OCI-LY7 (cell line): ENCODE measurements at regions of chr14 and their contacts with region 1.

Region 1: GRCh38 chr14:24366721-24367513 is 1.1 kb upstream of the NFATC4 start:
- DNase-seq: peak; percentile 98
- H3K4me3 ChIP-seq: peak overlapping the region; percentile 91
- H3K27ac ChIP-seq: peak overlapping the region; percentile 93
- H3K4me1 ChIP-seq: peaks cover 29% of the 10 kb centered on the region
- CTCF ChIP-seq: no peak

Region 2: DNA sequence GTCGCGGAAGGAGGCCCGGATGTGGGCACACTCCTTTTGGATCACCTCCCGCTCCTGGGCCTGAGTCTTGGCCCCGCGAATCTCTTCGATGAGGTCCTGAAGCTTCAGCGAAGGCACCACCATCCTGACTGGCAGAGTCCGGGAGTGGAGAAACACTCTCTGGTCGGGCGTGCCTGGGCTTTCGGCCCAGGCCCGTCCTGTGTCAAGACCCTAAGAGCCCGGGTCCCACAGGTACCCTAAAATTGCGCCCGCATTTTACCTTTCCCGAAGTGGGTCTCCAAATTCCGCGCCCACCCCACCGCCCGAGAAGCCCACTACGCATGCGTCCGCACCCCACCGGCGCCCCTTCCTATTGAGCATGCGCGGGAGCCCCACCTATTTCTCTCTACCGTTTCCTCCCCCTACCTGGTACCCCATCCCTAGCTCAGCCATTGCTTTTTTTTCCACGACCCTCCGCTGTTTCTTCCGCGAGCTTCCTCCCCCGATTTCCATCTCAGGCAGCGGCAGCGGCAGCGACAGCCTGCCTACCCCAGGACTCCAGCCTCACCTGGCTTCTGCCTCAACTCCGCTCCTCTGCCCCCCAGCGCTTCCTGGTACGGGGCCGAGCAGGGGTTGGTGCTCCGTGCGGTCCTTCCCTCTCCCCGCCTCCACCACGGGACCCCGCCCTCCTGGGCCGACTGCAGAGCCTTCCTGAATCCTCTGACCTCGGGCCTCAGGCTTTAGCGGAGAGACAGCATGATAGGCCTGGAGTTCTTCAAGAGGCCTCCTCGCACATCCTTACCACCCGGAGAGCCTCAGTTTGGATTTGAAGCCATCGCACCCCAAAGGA is 799.5 kb before region 1 on chr14 and contains the start of gene AP1G2:
- CTCF ChIA-PET with region 1: no interaction called
- POLR2A ChIA-PET with region 1: no interaction called
- intact Hi-C with region 1: loop called (anchors 10 kb)
- DNase-seq: peak; percentile 90
- H3K4me3 ChIP-seq: peak within 1 kb of the TSS; percentile 85
- H3K27ac ChIP-seq: peak within 1 kb of the TSS; percentile 55
- H3K4me1 ChIP-seq: peaks cover 29% of the 10 kb centered on the region
- CTCF ChIP-seq: no peak
- total RNA-seq, gene AP1G2: 110 and 129 TPM in 2 replicates

Region 3: GRCh38 chr14:24146978-24147760 is 219.7 kb before region 1 on chr14 and contains the start of gene RNF31:
- CTCF ChIA-PET with region 1: no interaction called
- POLR2A ChIA-PET with region 1: no interaction called
- intact Hi-C with region 1: loop called (anchors 2 kb)
- DNase-seq: peak; percentile 99
- H3K4me3 ChIP-seq: peak within 1 kb of the TSS; percentile 94
- H3K27ac ChIP-seq: peak within 1 kb of the TSS; percentile 82
- H3K4me1 ChIP-seq: peaks cover 20% of the 10 kb centered on the region
- CTCF ChIP-seq: no peak
- total RNA-seq, gene RNF31: 37.8 and 66.1 TPM in 2 replicates

Region 4: DNA sequence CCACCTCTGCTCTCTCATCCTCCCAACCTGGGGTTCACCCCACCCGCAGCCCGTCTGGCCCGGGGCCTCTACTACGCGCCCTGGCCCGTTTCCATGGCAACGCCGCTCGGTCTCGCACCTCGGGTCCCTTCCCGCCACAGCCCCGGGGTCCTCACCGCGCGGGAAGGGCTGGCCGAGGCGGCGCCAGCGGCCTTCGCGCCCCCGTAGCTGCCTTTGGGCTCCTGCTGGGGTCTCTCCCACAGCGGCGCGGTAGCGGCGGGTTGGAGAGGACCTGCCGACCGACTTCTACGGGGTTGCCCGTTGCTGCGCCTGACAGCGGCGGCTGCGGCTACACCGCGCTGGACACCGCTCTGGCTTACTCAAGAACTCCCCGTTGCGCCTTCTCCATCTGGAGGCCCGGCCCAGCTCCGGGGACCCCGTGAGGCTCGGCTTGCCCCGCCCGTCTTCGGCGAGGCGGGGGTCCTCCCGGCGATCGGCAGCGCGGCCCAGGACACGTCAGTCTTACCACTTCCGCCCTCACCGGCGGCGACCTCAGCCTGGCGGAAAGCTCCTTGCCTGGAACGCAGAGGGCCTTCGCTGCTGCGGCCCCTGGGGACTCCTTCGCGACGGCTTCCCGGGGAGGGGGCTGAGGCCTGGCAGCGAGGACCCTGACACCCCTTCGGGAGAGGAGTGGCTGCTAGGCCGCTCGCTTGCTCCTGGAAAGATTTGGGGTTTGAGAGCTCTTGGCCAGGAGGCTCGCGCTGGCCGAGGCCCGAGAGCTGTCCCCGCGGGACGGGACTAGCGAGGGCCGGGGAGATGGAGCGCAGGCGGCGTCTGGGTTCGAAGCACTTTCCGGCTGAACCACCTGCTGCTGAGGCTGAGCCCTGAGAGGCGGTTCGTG is 171.5 kb before region 1 on chr14 and contains the start of gene TM9SF1:
- CTCF ChIA-PET with region 1: no interaction called
- POLR2A ChIA-PET with region 1: no interaction called
- intact Hi-C with region 1: loop called (anchors 5 kb)
- DNase-seq: peak; percentile 93
- H3K4me3 ChIP-seq: peak within 1 kb of the TSS; percentile 75
- H3K27ac ChIP-seq: peak within 1 kb of the TSS; percentile 86
- H3K4me1 ChIP-seq: peaks cover 26% of the 10 kb centered on the region
- CTCF ChIP-seq: no peak
- total RNA-seq, gene TM9SF1: 23.4 and 31.3 TPM in 2 replicates

Region 5: DNA sequence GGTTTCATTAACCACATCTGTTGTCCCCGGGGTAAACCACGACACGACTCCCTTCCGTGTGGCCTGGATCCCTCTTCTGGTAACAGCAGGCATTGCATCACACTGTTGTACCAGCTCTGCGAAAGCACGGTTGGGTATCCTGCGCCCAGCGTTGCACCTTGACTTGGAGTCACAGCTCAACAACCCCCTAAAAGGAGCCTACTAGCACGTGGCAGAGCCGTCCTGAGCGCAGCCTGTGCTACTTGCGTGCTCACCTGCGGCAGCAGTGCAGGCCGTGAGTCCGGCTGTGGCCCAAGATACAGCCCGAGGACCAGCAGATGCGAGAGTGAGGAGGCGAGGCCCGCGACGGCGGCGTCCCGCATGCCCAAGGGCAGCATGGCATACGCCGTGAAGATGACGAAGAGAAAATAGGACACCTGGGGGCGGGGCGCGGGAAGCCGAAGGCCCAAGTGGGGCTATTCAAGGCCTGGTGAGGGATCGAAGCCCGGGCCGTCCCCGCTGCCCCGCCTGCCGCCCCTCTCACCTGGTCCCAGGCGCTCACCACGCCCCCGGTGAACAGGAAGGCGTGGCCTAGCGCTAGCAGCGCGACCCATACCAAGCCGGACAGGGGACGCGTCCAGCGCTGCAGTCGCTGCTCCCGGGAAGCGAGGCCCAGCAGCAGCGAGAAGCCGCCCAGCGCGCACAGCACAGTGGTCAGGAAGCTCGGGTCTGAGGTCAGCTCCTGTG is 34.5 kb before region 1 on chr14:
- CTCF ChIA-PET with region 1: interaction called, 3 read pairs
- POLR2A ChIA-PET with region 1: interaction called, 3 read pairs
- intact Hi-C with region 1: loop called (anchors 1 kb)
- DNase-seq: peak; percentile 92
- H3K4me3 ChIP-seq: peak overlapping the region; percentile 26
- H3K27ac ChIP-seq: no peak overlapping the region
- H3K4me1 ChIP-seq: peaks cover 26% of the 10 kb centered on the region
- CTCF ChIP-seq: peak; percentile 84

Region 6: DNA sequence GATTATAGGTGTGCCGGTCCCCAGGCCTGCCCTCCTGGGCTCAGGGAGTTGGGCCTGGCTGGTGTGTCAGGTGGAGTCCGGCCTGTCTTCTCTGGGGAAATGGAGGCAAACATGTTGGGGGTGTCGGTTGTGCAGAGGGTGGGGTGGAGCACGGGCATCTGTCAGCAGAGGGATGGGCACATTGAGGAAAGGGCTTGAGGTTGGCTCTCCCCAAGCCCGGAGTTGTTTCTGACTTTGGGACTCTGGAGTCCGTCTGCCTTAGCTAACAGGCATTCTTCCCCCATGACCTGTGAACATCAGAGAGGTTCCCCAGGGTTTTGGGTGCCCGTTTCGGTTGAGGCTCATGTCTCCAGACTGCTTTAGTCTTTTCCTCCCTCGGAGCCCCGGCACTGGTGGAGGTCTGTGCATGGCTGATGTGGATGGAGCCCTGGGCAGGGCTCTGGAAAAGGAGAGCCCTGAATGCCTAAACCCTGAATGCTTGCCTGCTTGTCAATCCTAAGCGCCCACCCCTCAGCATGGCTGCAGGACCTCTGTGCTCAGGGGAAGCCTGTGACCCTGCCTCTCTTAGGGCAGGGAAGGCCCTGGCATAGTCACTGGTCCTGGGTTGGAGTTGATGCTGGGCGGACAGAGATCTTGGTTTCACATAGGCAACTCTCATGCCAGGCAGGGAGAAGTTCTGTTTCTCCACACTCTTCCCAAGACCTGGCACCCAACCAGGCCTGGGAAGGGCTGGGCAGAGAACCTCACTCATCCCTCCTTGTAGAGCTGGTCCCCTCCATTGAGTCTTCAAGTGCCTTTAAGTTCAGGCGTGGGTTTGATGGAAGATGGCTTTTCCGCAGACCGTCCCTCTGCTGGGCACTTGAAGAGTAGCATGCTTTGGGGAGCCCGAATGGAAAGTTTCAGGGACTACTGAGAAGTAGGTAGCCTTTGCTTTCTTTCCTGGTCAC is 44.8 kb after region 1 on chr14:
- CTCF ChIA-PET with region 1: interaction called, 3 read pairs
- POLR2A ChIA-PET with region 1: interaction called, 4 read pairs
- intact Hi-C with region 1: loop called (anchors 1 kb)
- DNase-seq: peak; percentile 66
- H3K4me3 ChIP-seq: no peak overlapping the region
- H3K27ac ChIP-seq: no peak overlapping the region
- H3K4me1 ChIP-seq: no peaks in the 10 kb centered on the region
- CTCF ChIP-seq: peak; percentile 77

Region 7: DNA sequence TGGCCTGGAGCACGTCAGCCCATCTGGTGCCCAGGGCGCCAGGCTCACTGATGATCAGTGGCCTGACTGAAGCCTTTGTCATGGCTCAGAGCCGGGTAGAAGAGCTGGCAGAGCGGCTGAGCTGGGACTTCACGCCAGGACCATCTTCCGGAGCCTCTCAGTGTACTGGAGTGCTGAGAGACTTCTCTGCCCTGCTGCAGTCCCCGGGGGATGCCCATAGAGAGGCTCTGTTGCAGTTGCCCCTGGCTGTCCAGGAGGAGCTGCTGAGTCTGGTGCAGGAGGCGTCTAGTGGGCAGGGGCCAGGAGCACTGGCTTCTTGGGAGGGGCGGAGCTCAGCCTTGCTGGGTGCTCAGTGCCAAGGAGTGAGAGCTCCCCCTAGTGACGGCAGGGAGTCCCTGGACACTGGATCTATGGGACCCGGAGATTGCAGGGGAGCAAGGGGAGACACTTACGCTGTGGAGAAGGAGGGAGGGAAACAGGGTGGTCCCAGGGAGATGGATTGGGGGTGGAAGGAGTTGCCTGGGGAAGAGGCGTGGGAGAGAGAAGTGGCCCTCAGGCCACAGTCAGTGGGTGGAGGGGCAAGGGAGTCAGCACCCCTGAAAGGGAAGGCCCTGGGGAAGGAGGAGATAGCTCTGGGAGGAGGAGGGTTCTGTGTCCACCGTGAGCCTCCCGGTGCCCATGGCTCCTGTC is 64.8 kb after region 1 on chr14:
- CTCF ChIA-PET with region 1: interaction called, 24 read pairs
- POLR2A ChIA-PET with region 1: interaction called, 24 read pairs
- intact Hi-C with region 1: loop called (anchors 1 kb)
- DNase-seq: peak; percentile 95
- H3K4me3 ChIP-seq: peak overlapping the region; percentile 82
- H3K27ac ChIP-seq: peak overlapping the region; percentile 68
- H3K4me1 ChIP-seq: peaks cover 39% of the 10 kb centered on the region
- CTCF ChIP-seq: peak; percentile 97